ENCODE measurements at regions of chr5 and their contacts with region 1.

Region 1: DNA sequence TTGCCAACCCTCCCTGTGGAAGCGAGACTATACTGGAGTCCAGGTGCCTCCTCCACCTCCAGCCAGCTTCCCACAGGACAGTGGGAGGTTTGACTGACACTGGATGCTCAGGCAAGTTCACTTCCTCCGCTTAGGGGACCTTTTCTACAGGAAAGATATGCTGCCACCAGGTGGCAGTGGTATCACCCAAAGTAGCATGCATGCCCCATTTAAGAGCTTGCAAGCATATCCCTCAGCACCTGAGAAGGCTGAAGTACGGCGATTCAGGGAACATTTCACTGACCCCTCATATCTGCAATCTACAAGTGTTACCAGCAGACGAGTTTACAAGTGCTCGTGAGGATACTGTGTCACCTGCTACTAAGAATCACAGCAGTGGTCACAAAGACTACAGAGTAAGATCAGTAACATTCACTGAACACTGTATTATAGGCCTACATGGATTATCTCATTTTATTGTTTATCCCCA is 75.5 kb downstream of the KLHL3 start:
- DNase-seq: peak; percentile 16
- H3K4me3 ChIP-seq: no peak overlapping the region
- H3K27me3 ChIP-seq: no peaks in the 10 kb centered on the region
- CTCF ChIP-seq: peak; percentile 85

Region 2: DNA sequence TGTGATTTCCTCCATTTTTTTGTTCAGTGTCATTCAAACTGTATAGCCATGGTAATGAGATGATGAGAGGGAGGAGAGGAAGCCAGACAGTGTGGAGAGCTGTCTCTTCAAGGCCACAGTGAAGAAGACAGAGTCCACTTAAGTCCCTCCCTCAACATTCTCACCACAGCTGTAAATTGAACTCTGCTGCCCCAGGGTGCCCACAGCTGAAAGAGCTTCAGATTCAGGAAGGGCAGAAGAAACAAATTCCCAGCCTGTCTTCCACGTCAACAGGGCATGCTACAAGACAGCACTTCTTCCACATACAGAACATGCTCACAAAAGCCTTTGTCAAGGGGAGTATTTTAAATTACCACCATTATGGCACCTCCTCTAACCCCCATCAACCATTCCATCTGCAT is 24.9 kb before region 1 on chr5:
- CTCF ChIA-PET with region 1: interaction called, 37 read pairs
- POLR2A ChIA-PET with region 1: no interaction called
- DNase-seq: no peak
- H3K4me3 ChIP-seq: no peak overlapping the region
- H3K27me3 ChIP-seq: no peaks in the 10 kb centered on the region
- CTCF ChIP-seq: no peak

Region 3: GRCh38 chr5:137649228-137649935 is 11.0 kb before region 1 on chr5:
- CTCF ChIA-PET with region 1: interaction called, 11 read pairs
- POLR2A ChIA-PET with region 1: no interaction called
- DNase-seq: no peak
- H3K4me3 ChIP-seq: no peak overlapping the region
- H3K27me3 ChIP-seq: no peaks in the 10 kb centered on the region
- CTCF ChIP-seq: no peak

Region 4: DNA sequence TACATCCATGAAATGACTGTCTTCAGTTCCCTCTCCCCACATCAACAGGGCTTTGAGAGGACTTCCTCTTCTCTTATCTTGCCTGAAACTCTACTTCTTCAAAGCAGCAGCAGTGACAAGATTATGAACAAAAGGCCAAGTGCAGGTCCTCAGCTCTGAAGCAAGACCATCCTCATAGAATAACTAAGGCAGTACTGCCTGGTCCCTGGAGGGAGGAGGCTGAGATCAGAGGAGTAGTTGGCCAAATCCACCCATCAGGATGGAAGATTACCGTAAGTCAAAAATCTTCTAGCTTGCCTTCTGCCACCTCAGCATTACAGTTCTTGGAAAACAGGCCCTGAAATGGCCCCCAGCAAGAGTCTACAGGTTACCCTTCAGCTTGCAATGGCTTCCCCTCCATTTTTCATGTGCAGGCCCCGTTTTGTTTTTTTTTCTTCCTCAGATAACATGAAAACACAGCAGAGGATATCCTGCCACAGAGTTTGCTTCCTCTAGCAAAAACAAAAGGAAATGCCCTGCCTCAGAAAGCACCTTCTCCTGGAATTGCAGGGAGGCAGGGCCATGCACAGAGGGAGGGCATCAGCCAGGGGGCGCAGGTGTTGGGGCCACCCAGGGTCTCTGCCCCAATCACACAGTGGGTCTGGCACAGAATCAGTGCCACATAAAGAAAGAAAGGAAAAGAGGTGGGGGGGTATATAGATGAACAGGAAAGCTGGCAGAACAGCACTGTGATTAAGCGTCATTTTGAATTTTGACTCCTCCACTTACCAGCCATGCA is 35.5 kb after region 1 on chr5:
- CTCF ChIA-PET with region 1: interaction called, 13 read pairs
- POLR2A ChIA-PET with region 1: no interaction called
- DNase-seq: no peak
- H3K4me3 ChIP-seq: no peak overlapping the region
- H3K27me3 ChIP-seq: no peaks in the 10 kb centered on the region
- CTCF ChIP-seq: no peak

Region 5: GRCh38 chr5:137754126-137754960 is 94.0 kb after region 1 on chr5 and contains the start of gene HNRNPA0:
- CTCF ChIA-PET with region 1: interaction called, 11 read pairs
- POLR2A ChIA-PET with region 1: no interaction called
- DNase-seq: peak; percentile 75
- H3K4me3 ChIP-seq: peak within 1 kb of the TSS; percentile 71
- H3K27me3 ChIP-seq: no peaks in the 10 kb centered on the region
- CTCF ChIP-seq: 0 out of 2 replicates have a peak, but pooled peaks have one; percentile 5
- polyA plus RNA-seq, gene HNRNPA0: 10.2 and 10.3 TPM in 2 replicates

Region 6: GRCh38 chr5:138274189-138274853 is 613.9 kb after region 1 on chr5 and contains the start of gene GFRA3:
- CTCF ChIA-PET with region 1: no interaction called
- POLR2A ChIA-PET with region 1: no interaction called
- DNase-seq: no peak
- H3K4me3 ChIP-seq: peak within 1 kb of the TSS; percentile 37
- H3K27me3 ChIP-seq: peaks cover 4% of the 10 kb centered on the region
- CTCF ChIP-seq: no peak
- polyA plus RNA-seq, gene GFRA3: not detected in 2 replicates